Right ventricle myocardium inferior (tissue), 1 donor: ENCODE measurements at regions of chr7 and their contacts with region 1.

Region 1: GRCh38 chr7:119935418-119936025 is 337.5 kb upstream of the KCND2 start:
- DNase-seq: no peak
- ATAC-seq: no peak

Region 2: GRCh38 chr7:119452401-119452800 is 483.1 kb before region 1 on chr7:
- intact Hi-C with region 1: no loop called
- DNase-seq: no peak
- ATAC-seq: no peak

Region 3: DNA sequence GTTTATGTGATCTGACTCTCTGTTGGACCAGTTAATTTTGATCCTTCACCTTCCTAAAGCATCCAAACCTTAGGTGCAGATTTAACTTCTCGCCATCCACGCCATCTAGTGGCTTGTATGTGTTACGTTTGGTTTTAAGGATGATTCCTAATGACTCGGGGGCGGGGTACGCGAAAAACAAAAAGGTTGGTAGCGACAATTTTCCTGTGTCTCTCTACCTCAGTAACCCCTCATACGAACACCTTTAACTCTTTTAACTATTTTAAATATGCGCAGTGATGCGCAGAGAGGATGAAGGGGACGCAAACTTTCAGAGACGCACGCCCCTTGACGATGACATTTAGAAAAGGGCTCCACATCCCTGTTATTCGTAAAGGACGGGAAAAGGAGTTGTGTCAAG is 336.7 kb after region 1 on chr7:
- intact Hi-C with region 1: loop called (anchors 2 kb)
- DNase-seq: no peak
- ATAC-seq: no peak

Region 4: DNA sequence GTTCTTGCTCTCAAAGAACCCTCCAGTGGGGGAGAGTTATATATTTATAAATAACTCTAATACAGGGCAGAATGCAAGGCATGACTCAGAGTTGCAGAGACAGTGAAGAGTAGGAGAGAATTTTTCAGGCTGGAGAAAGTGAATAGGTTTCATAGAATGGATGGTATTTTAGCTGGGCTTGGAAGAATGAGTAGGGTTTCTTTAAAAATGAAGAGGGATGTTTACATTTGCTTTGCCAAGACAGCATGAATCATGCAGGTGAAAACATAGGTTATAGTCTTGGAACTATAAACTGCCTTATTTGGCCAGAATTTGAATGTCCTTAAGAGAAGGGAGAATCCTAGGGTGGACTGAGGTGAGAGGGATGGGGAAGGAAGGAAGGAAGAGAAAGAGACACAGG is 1177.8 kb after region 1 on chr7:
- intact Hi-C with region 1: no loop called
- DNase-seq: no peak
- ATAC-seq: no peak